ENCODE measurements at regions of chr1 and their contacts with region 1.

Region 1: GRCh38 chr1:204128964-204129896 is 22.6 kb downstream of the ETNK2 start:
- DNase-seq: peak; percentile 93

Region 2: GRCh38 chr1:203861379-203862184 is 267.6 kb before region 1 on chr1 and contains the start of gene SNRPE:
- intact Hi-C with region 1: loop called (anchors 2 kb)
- DNase-seq: peak; percentile 99
- total RNA-seq, gene SNRPE: 72.3 to 79.5 TPM

Region 3: DNA sequence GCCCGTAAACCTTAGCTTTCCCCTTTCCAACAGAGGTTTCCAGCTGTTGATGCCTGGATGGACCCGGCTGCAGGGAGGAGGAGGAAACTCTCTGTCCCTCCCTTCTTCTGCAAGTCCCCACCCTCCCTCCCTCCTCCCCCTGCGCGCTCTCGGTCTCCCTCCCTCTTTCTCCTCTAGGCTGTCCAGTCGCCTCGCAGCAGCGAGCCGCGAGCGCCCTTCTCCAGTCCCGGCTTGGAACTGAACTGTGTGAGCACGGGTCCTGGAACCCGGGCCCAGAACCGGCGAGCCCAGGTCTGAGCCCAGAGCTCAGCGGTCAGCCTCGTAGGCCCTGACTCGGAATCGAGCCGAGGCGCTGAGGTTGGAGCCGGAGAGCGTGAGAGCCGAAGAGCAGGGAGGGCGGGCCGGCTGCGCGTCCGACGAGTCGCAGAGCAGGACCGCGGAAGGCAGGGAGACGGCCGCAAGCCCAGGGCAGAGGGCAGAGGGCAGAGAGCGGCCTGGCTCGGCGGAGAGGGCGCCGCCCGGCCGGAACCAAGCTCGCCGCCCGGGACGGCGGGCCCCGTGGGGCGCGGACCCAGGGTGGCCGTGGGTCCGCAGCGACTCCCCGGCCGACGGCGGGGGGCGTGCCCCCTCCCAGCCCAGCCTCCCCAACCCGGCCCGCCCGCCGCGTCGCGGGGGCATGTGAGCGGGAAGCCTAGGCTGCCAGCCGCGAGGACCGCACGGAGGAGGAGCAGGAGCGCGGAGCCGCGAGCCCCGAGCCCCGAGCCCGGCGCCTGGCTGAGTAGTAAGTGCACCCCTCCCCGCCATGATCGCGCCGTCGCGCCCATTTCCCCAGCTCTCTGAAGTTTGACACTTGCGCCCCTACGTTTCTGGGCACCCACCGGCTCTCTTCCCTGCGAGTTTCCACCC is 56.0 kb before region 1 on chr1 and contains the start of gene SOX13:
- intact Hi-C with region 1: loop called (anchors 2 to 10 kb)
- DNase-seq: peak; percentile 96
- total RNA-seq, gene SOX13: 43.6 to 47.0 TPM

Region 4: GRCh38 chr1:205118752-205119151 is 989.5 kb after region 1 on chr1:
- intact Hi-C with region 1: loop called in 1 of 2 experiments (anchors 5 kb)
- DNase-seq: no peak

Measured in posterior vena cava (tissue), 2 donors.